Caco-2 (cell line): ENCODE measurements at regions of chr11 and their contacts with region 1.

Region 1: DNA sequence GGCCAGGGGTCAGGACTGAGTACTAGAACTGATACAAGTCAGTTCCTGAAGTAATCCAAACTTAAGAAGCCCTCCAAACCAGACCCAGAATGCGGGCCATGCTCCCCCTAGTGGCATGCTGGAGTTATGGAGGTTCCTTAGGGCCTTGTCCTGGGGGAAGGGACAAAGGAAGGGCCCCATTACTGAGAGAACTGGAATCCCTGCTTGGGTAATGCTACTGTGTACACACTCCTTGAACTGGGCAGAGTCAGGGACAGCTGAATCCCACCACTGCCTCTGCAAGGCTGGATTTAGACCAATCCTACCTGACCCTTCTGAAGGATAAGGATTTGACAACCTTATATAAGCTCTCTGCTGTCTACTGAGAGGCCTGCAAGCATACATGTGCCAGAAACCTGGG is 97.3 kb upstream of the AKIP1 start:
- DNase-seq: peak; percentile 88
- H3K4me3 ChIP-seq: no peak overlapping the region
- H3K4me3 Mint-ChIP-seq: no peak overlapping the region
- H3K27ac Mint-ChIP-seq: no peak overlapping the region
- H3K4me1 ChIP-seq: peaks cover 13% of the 10 kb centered on the region
- H3K4me1 Mint-ChIP-seq: peaks cover 7% of the 10 kb centered on the region
- H3K27me3 ChIP-seq: no peaks in the 10 kb centered on the region
- H3K27me3 Mint-ChIP-seq: no peaks in the 10 kb centered on the region
- CTCF ChIP-seq: peak; percentile 88 to 91

Region 2: GRCh38 chr11:8610532-8611116 is 203.0 kb before region 1 on chr11:
- CTCF ChIA-PET with region 1: no interaction called
- POLR2A ChIA-PET with region 1: no interaction called
- intact Hi-C with region 1: loop called (anchors 10 kb)
- DNase-seq: no peak
- H3K4me3 ChIP-seq: no peak overlapping the region
- H3K4me3 Mint-ChIP-seq: no peak overlapping the region
- H3K27ac Mint-ChIP-seq: no peak overlapping the region
- H3K4me1 ChIP-seq: no peaks in the 10 kb centered on the region
- H3K4me1 Mint-ChIP-seq: peaks cover 8% of the 10 kb centered on the region
- H3K27me3 ChIP-seq: no peaks in the 10 kb centered on the region
- H3K27me3 Mint-ChIP-seq: peaks cover 4% of the 10 kb centered on the region
- CTCF ChIP-seq: no peak

Region 3: DNA sequence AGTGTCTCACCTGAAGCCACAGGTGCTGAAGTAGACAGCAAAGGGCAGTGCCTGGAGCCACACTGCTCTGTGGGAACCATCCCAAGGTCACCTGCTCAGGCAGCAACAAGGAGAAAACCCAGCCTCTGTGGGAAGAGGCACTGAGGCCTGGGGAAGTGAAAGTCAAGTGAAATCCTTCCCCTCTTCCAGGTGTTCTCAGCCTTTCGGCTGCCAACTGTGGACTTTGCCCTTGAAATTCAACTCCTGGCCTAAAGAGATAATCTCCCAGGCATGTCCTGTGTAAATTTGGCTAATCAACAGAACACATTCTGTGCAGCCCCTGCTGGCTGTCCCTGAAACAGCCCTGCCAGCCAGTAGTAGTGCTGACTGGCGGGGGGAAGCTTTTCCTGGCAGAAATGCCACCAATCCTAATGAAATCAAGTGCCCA is 19.0 kb before region 1 on chr11:
- CTCF ChIA-PET with region 1: no interaction called
- POLR2A ChIA-PET with region 1: no interaction called
- intact Hi-C with region 1: loop called (anchors 2 kb)
- DNase-seq: peak; percentile 86 to 89
- H3K4me3 ChIP-seq: peak overlapping the region; percentile 33
- H3K4me3 Mint-ChIP-seq: peak overlapping the region; percentile 68
- H3K27ac Mint-ChIP-seq: peak overlapping the region; percentile 83
- H3K4me1 ChIP-seq: peaks cover 31% of the 10 kb centered on the region
- H3K4me1 Mint-ChIP-seq: peaks cover 38% of the 10 kb centered on the region
- H3K27me3 ChIP-seq: no peaks in the 10 kb centered on the region
- H3K27me3 Mint-ChIP-seq: no peaks in the 10 kb centered on the region
- CTCF ChIP-seq: peak; percentile 82 to 94

Region 4: GRCh38 chr11:8870411-8871170 is 56.9 kb after region 1 on chr11:
- CTCF ChIA-PET with region 1: interaction called, 18 read pairs
- POLR2A ChIA-PET with region 1: no interaction called
- intact Hi-C with region 1: loop called (anchors 2 kb)
- DNase-seq: peak; percentile 81 to 82
- H3K4me3 ChIP-seq: peak overlapping the region; percentile 70
- H3K4me3 Mint-ChIP-seq: peak overlapping the region; percentile 84
- H3K27ac Mint-ChIP-seq: peak overlapping the region; percentile 83
- H3K4me1 ChIP-seq: peaks cover 30% of the 10 kb centered on the region
- H3K4me1 Mint-ChIP-seq: peaks cover 15% of the 10 kb centered on the region
- H3K27me3 ChIP-seq: no peaks in the 10 kb centered on the region
- H3K27me3 Mint-ChIP-seq: no peaks in the 10 kb centered on the region
- CTCF ChIP-seq: no peak